GM23248 (cell line): ENCODE measurements at regions of chr9 and their contacts with region 1.

Region 1: DNA sequence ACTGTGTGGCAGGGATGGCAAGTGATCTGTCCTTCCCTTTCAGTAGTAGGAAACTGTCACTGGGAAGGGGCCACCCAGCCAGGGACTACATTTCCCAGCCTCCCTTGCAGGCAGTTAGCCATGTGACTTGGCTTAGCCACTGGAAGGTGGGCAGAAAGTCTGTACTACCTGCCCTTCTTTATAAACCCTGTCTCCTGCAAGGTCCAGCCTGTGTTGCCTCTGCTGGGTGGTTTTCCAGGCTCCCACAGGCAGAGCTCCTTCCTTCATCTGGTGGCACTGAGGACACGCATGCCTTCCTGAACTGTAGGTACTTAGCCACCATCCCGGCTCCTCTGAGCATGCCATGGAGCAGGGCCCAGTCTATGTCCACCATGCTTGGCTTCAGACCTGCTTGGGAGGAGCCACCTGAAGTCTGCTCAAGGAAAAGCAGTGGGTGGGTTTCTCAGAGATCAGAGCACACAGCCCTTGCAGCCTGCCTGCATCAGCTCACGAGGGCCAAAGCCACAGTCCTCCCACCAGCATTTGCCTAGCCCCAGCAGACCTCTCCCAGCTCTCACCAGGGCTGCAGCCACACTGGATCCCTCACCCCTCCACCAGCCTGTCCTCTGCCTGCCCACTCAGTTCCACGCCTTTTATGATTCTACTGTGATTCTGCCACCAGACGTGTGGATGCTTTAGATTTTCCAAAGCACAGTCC is 16.7 kb upstream of the SLC25A51 start:
- DNase-seq: no peak
- H3K4me3 ChIP-seq: no peak overlapping the region
- H3K27ac ChIP-seq: no peak overlapping the region
- H3K4me1 ChIP-seq: no peaks in the 10 kb centered on the region
- H3K27me3 ChIP-seq: no peaks in the 10 kb centered on the region

Region 2: DNA sequence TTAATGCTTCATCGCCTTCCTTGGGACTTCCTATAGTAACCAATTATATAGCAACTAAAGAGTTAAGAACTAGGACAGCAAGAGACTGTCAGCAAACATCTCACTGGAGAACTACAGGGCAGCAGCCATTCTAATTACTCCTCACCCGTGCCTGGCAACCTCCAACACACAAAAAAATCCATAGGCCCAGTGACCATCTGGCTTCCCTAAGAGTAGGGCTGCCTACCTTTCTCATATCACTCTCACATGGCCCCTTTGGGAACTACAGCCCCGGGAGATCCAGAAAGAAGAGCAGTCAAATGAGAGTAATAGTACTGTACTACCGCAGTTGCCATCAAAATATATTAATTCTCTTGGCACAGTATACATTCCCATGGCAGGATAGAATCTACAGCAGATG is 114.3 kb before region 1 on chr9:
- in situ Hi-C with region 1: no loop called
- DNase-seq: no peak
- H3K4me3 ChIP-seq: no peak overlapping the region
- H3K27ac ChIP-seq: no peak overlapping the region
- H3K4me1 ChIP-seq: peaks cover 20% of the 10 kb centered on the region
- H3K27me3 ChIP-seq: no peaks in the 10 kb centered on the region

Region 3: GRCh38 chr9:38079461-38080031 is 158.9 kb after region 1 on chr9:
- in situ Hi-C with region 1: loop called (anchors 10 kb)
- DNase-seq: peak; percentile 50
- H3K4me3 ChIP-seq: no peak overlapping the region
- H3K27ac ChIP-seq: no peak overlapping the region
- H3K4me1 ChIP-seq: peaks cover 24% of the 10 kb centered on the region
- H3K27me3 ChIP-seq: no peaks in the 10 kb centered on the region

Region 4: DNA sequence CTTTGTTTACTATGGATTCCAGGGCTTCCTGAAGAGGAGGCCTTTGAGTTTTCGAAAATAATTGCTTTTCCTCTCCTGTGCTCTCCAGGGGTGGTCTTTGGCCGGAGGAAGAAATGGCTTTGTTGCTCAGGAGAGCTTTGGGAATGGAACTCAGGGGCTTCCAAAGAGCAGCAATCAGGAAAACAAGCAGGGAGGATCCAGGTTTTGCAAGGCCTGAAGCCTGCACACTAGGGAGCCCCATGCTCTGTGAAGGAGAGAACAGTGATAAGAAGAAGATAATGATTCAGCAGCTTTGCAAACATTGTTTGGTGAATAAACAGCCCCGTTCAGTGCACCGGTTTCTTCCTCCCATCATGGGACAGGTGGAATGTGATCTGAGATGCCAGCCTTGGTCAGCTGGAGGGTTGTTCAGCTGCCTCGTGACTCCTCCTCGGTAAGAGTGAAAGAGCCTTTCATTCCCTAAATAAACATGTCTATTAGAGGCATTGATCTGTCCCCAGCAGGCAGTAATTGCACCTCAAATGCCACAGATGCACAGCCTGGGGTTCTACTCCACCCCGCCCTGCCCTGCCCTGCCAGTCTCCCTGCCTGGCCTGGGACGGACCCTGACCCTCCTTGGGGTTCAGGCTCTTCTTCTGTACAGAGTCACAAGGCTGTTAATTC is 460.4 kb after region 1 on chr9:
- in situ Hi-C with region 1: no loop called
- DNase-seq: no peak
- H3K4me3 ChIP-seq: no peak overlapping the region
- H3K27ac ChIP-seq: no peak overlapping the region
- H3K4me1 ChIP-seq: peaks cover 17% of the 10 kb centered on the region
- H3K27me3 ChIP-seq: no peaks in the 10 kb centered on the region